Activated naive CD4-positive, alpha-beta T cell treated with anti-CD3 and anti-CD28 coated beads for 36 hours (primary cell): ENCODE measurements at regions of chr1 and their contacts with region 1.

Region 1: DNA sequence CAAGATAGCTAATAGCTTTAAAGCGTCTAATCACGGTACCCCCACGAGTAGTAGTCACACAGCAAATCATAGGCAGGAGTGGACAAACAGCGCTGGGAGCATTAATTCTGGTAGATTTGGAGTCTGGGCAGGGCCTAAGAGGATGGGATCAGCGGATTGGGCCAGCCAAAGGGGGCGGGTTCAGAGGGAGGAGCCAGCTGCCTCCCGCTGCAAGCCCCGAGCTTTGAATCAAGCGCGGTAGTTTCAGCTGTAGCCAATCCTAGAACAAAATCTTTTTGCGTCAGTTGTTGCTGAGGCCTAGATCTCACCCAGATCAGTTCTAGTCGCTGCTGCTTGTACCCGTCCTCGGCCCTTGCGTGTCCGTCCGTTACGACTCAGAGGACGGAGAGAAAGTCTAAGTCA is 576 bp upstream of the NASP start:
- DNase-seq: peak; percentile 96
- H3K4me3 Mint-ChIP-seq: peak overlapping the region; percentile 95
- H3K27ac Mint-ChIP-seq: peak overlapping the region; percentile 98
- H3K4me1 Mint-ChIP-seq: peaks cover 22% of the 10 kb centered on the region
- H3K27me3 Mint-ChIP-seq: no peaks in the 10 kb centered on the region

Region 2: GRCh38 chr1:44799770-44800584 is 783.3 kb before region 1 on chr1 and contains the start of gene PLK3:
- CTCF ChIA-PET with region 1: no interaction called
- intact Hi-C with region 1: loop called (anchors 10 kb)
- DNase-seq: peak; percentile 99
- H3K4me3 Mint-ChIP-seq: peak within 1 kb of the TSS; percentile 81
- H3K27ac Mint-ChIP-seq: peak within 1 kb of the TSS; percentile 100
- H3K4me1 Mint-ChIP-seq: peaks cover 36% of the 10 kb centered on the region
- H3K27me3 Mint-ChIP-seq: no peaks in the 10 kb centered on the region
- total RNA-seq, gene PLK3: 44.2 to 46.7 TPM

Region 3: DNA sequence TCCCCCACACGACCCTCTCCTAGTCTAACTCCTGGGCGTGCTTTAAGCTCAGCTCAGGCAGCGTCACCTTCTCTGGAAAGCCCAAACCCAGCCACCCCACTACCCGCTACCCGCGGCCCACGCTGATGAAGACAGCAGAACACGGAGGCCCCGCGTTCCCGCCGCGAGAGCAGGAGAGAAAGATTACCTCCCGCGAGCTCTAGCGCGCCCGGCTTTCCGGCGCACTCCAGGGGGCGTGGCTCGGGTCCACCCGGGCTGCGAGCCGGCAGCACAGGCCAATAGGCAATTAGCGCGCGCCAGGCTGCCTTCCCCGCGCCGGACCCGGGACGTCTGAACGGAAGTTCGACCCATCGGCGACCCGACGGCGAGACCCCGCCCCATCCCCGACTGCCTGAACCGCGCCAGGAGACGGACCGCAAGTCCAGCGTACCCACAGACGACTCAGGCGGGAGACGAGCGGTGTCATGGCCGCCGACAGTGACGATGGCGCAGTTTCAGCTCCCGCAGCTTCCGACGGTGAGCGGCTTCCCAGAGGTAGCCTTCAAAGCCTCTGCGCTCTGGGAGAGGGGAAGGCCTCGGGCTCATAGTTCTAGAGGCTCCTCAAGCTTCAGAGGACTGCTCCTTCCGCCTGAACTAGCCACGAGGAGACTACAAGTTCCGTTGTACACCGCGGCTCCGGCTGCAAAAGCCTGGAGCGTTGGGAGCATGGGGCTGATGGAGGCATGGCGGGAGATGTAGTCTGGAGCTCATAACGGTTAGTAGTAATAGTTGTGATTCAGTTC is 243.3 kb before region 1 on chr1 and contains the starts of genes MUTYH and TOE1:
- CTCF ChIA-PET with region 1: no interaction called
- intact Hi-C with region 1: loop called (anchors 1 kb)
- DNase-seq: peak; percentile 95
- H3K4me3 Mint-ChIP-seq: peak within 1 kb of the TSS; percentile 100
- H3K27ac Mint-ChIP-seq: peak within 1 kb of the TSS; percentile 100
- H3K4me1 Mint-ChIP-seq: peaks cover 35% of the 10 kb centered on the region
- H3K27me3 Mint-ChIP-seq: no peaks in the 10 kb centered on the region
- total RNA-seq, gene MUTYH: 42.0 to 45.0 TPM
- total RNA-seq, gene TOE1: 23.0 to 23.8 TPM

Region 4: DNA sequence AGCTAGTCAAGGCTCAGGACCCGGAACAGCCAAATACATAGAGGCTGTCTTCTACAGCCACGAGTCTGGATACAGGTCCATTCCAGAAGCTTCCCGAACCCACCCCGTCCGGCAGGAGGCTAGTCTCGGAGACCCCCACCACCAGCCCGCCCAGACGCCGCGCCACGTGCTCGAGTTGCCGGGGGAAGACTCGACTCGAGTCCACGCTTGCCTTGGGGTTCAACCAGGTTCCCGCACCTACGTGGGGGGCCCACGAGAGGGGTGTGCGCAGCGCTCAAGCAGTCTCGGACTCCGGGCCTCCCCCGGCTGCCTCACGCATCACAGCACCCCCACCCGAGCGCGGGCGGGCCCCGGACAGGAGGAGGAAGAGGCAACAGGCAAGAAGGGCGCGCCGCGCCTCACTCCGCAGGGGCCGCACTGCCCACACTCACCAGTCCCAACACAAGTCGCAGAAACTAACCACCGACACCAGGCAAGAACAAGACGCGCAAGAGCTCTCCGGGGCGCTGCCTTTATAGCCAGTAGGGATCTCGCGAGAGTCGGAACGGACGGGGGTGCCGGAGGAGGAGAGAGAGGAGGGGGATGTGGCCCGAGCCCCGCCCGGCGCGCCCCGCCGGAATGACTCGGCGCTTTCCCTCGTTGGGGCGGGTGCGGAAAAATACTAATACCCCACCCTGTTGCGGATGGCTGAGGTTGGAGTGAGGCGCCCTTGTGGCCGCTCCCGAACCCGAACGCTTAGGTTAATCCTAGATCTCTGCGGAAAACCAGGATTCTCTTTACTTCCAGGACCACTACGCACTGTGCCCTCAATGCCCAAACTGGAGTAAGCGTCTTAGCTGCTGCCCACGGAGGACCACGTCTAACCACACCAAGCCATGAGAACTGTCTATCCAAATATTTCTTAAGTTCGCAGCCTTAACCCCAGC is 61.6 kb before region 1 on chr1 and contains the start of gene PRDX1:
- CTCF ChIA-PET with region 1: interaction called, 7 read pairs
- intact Hi-C with region 1: loop called (anchors 1 kb)
- DNase-seq: peak; percentile 96
- H3K4me3 Mint-ChIP-seq: peak within 1 kb of the TSS; percentile 93
- H3K27ac Mint-ChIP-seq: peak within 1 kb of the TSS; percentile 88
- H3K4me1 Mint-ChIP-seq: peaks cover 46% of the 10 kb centered on the region
- H3K27me3 Mint-ChIP-seq: no peaks in the 10 kb centered on the region
- total RNA-seq, gene PRDX1: 596 to 641 TPM

Region 5: DNA sequence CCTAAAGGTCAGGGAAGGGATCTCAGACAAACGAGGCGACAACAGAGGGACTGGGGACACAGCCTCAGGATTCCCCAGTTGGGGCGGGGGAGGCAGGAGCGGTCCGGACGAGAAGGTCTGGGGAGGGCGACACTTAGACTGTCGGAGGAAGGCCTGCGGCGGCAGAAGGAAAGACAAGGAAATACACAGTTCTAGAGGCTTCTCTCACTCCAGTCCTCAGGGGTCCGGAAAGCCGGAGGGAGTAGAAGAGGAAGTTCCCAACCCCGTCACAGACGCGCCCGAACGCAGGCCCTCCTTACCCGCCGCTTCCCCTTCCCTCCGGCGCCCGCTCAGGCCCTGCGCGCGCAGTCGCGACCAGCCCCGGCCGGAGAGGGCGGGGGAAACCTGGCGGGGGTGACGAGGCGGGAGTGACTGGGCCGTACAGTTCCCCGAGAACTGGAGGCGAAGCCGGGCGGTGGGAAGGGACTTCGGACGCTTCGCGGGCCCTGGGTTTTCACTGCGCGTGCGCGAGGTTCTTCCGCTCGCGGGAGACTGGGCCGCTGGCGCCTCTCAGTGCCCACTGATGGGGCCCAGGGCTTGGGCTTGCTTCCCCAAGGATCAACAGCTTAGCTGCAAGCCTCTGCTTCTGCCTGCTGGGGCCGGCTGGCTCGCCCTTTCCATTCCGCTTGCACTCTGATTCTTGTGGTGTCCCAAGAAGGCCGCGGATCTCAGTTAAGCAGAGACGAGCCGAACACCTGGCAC is 167.2 kb after region 1 on chr1 and contains the start of gene IPP:
- CTCF ChIA-PET with region 1: no interaction called
- intact Hi-C with region 1: loop called (anchors 1 kb)
- DNase-seq: peak; percentile 96
- H3K4me3 Mint-ChIP-seq: peak within 1 kb of the TSS; percentile 95
- H3K27ac Mint-ChIP-seq: peak within 1 kb of the TSS; percentile 97
- H3K4me1 Mint-ChIP-seq: peaks cover 31% of the 10 kb centered on the region
- H3K27me3 Mint-ChIP-seq: no peaks in the 10 kb centered on the region
- total RNA-seq, gene IPP: 19.1 to 20.2 TPM

Region 6: DNA sequence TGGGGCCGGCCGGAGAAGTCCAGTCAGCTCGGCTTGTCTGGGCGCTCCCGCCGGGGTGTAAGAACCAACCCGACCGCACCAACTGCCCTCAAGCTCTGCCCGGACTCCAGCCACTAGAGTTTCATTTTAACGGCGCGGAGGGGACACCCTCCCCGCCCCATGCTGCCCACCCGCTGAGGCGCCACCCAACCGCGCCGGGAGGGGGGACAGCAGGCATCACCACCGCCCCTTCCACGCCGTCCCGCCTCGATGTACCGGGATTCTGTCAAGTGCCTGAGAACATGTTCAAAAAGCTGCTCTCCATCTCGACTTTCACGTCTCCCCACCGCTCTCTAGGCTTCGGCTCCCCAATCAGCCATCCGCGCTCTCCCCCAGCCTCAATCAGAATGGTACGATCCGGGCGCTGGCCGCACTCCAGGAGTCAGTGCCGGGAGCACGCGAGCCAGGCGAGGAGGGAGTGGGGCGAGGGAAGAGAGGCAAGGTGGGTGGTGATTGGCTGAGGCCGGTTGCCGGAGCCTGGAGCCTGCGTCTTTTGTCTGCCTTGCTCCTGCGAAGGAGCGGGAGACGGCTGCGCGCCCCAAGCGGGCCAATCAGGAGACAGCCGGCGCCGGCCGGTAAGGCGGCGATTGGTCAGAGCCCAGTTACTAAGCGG is 549.4 kb after region 1 on chr1 and contains the start of gene PIK3R3:
- CTCF ChIA-PET with region 1: no interaction called
- intact Hi-C with region 1: loop called (anchors 5 kb)
- DNase-seq: peak; percentile 90
- H3K4me3 Mint-ChIP-seq: peak within 1 kb of the TSS; percentile 84
- H3K27ac Mint-ChIP-seq: peak within 1 kb of the TSS; percentile 56
- H3K4me1 Mint-ChIP-seq: peaks cover 19% of the 10 kb centered on the region
- H3K27me3 Mint-ChIP-seq: peaks cover 50% of the 10 kb centered on the region
- total RNA-seq, gene PIK3R3: 0.45 to 0.49 TPM